ENCODE measurements at regions of chrX and their contacts with region 1.

Region 1: DNA sequence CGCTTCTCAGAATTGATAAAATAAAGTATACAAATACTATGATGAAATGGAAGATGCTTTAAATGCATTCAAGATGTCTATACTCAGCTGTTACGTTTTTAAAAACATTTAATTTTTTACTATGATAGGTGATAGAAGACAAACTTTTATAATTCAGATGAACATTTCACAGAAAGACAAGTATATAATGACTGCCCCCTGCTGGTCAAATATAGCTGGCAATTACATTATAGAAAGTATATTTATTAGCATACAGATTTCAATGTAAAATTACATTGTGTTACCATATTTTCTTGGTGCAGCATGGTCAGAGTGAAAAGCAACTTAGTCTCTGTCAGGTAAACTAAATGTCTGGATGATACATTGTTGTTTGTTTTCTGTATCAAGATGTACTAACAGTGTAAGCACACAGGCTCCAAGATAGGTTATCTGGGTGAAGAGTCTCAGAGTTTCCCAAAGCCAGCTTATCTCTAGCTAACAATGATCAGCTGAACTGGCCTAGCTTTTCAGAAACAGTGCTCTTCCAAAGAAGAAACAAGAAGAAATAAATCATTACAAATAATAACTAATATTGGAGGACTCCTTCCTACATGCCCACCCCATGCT is 54.1 kb downstream of the SRPX start:
- DNase-seq: no peak
- ATAC-seq: peak; percentile 51
- H3K4me3 ChIP-seq: no peak overlapping the region
- H3K27ac ChIP-seq: no peak overlapping the region
- H3K4me1 ChIP-seq: no peaks in the 10 kb centered on the region
- H3K27me3 ChIP-seq: no peaks in the 10 kb centered on the region; a peak in 1 of 4 replicates
- CTCF ChIP-seq: peak; percentile 34 to 52 (median 45); a peak in 3 of 6 replicates
- EP300 ChIP-seq: no peak
- POLR2A ChIP-seq: no peak
- RAD21 ChIP-seq: peak; percentile 61

Region 2: GRCh38 chrX:37509349-37509748 is 657.2 kb before region 1 on chrX:
- CTCF ChIA-PET with region 1: no interaction called
- POLR2A ChIA-PET with region 1: no interaction called
- RAD21 ChIA-PET with region 1: no interaction called
- SMC1A ChIA-PET with region 1: interaction called, 3 read pairs
- in situ Hi-C with region 1: loop called (anchors 25 kb)
- intact Hi-C with region 1: no loop called
- DNase-seq: no peak
- ATAC-seq: peak; percentile 72
- H3K4me3 ChIP-seq: no peak overlapping the region
- H3K27ac ChIP-seq: no peak overlapping the region
- H3K4me1 ChIP-seq: no peaks in the 10 kb centered on the region
- H3K27me3 ChIP-seq: no peaks in the 10 kb centered on the region
- CTCF ChIP-seq: peak; percentile 17 to 37 (median 26); a peak in 2 of 6 replicates
- EP300 ChIP-seq: no peak
- POLR2A ChIP-seq: no peak
- RAD21 ChIP-seq: no peak

Region 3: GRCh38 chrX:37926700-37927099 is 239.9 kb before region 1 on chrX:
- CTCF ChIA-PET with region 1: interaction called, 163 read pairs
- POLR2A ChIA-PET with region 1: no interaction called
- RAD21 ChIA-PET with region 1: interaction called, 71 read pairs
- SMC1A ChIA-PET with region 1: interaction called, 124 read pairs
- in situ Hi-C with region 1: loop called (anchors 5 kb)
- intact Hi-C with region 1: loop called (anchors 1 kb)
- DNase-seq: peak; percentile 4
- ATAC-seq: peak; percentile 84
- H3K4me3 ChIP-seq: no peak overlapping the region
- H3K27ac ChIP-seq: no peak overlapping the region
- H3K4me1 ChIP-seq: no peaks in the 10 kb centered on the region
- H3K27me3 ChIP-seq: no peaks in the 10 kb centered on the region
- CTCF ChIP-seq: peak in 2 of 3 experiments; percentile 46 to 50; a peak in 3 of 6 replicates
- EP300 ChIP-seq: no peak
- POLR2A ChIP-seq: no peak
- RAD21 ChIP-seq: peak; percentile 60

Region 4: DNA sequence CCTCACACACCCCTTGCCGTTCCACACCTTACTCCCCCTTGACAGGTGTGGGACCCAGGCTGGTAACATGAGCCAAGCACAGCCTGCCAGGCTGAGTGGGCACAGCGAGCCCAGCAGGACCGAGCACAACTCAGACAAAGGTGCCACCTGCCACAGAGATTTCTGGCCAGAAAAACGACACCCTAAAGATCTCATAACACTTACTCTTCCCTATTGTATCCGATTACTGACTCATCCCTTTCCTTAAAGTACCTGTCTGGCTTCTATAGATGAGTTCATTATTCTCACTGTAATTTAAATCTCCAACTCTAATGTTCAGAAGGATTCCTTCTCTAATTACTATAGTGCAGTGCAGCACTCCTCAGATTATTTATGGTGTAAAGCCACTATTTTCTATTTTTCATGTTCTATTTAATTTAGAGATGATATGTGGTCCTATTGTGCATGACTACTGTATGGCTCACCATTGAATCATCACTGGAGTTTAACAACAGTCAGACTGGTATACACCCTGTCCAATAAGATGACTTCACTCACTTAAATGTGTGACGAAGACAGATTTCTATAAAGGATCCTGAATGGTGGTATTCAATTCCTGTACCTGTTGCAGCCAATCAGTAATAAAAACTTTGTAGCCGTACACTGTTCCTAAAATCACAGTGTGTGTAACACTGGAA is 167.9 kb before region 1 on chrX:
- CTCF ChIA-PET with region 1: interaction called, 34 read pairs
- POLR2A ChIA-PET with region 1: no interaction called
- RAD21 ChIA-PET with region 1: interaction called, 13 read pairs
- SMC1A ChIA-PET with region 1: interaction called, 9 read pairs
- in situ Hi-C with region 1: no loop called
- intact Hi-C with region 1: no loop called
- DNase-seq: no peak
- ATAC-seq: no peak
- H3K4me3 ChIP-seq: no peak overlapping the region
- H3K27ac ChIP-seq: no peak overlapping the region
- H3K4me1 ChIP-seq: no peaks in the 10 kb centered on the region
- H3K27me3 ChIP-seq: no peaks in the 10 kb centered on the region
- CTCF ChIP-seq: no peak
- EP300 ChIP-seq: no peak
- POLR2A ChIP-seq: no peak
- RAD21 ChIP-seq: no peak

Region 5: GRCh38 chrX:38103857-38104812 is 62.4 kb before region 1 on chrX:
- CTCF ChIA-PET with region 1: interaction called, 12 read pairs
- POLR2A ChIA-PET with region 1: no interaction called
- RAD21 ChIA-PET with region 1: interaction called, 6 read pairs
- SMC1A ChIA-PET with region 1: interaction called, 11 read pairs
- in situ Hi-C with region 1: no loop called
- intact Hi-C with region 1: loop called (anchors 2 kb)
- DNase-seq: peak; percentile 76
- ATAC-seq: peak; percentile 89
- H3K4me3 ChIP-seq: no peak overlapping the region
- H3K27ac ChIP-seq: peak overlapping the region; percentile 51; the same call in 1 of the 2 replicates
- H3K4me1 ChIP-seq: no peaks in the 10 kb centered on the region
- H3K27me3 ChIP-seq: no peaks in the 10 kb centered on the region
- CTCF ChIP-seq: no peak
- EP300 ChIP-seq: peak in 1 of 2 experiments; percentile 58; a peak in 2 of 4 replicates
- POLR2A ChIP-seq: no peak
- RAD21 ChIP-seq: no peak

Region 6: GRCh38 chrX:38192007-38192810 is 25.6 kb after region 1 on chrX:
- CTCF ChIA-PET with region 1: interaction called, 30 read pairs
- POLR2A ChIA-PET with region 1: no interaction called
- RAD21 ChIA-PET with region 1: interaction called, 3 read pairs
- SMC1A ChIA-PET with region 1: interaction called, 5 read pairs
- in situ Hi-C with region 1: no loop called
- intact Hi-C with region 1: no loop called
- DNase-seq: no peak
- ATAC-seq: peak; percentile 87
- H3K4me3 ChIP-seq: no peak overlapping the region
- H3K27ac ChIP-seq: no peak overlapping the region
- H3K4me1 ChIP-seq: 0 out of 2 replicates have a peak, but pooled peaks cover 2% of the 10 kb centered on the region
- H3K27me3 ChIP-seq: no peaks in the 10 kb centered on the region; a peak in 1 of 4 replicates
- CTCF ChIP-seq: peak; percentile 45 to 54 (median 51)
- EP300 ChIP-seq: no peak
- POLR2A ChIP-seq: no peak
- RAD21 ChIP-seq: peak; percentile 68

Region 7: GRCh38 chrX:38233891-38234667 is 67.5 kb after region 1 on chrX:
- CTCF ChIA-PET with region 1: no interaction called
- POLR2A ChIA-PET with region 1: no interaction called
- RAD21 ChIA-PET with region 1: no interaction called
- SMC1A ChIA-PET with region 1: no interaction called
- in situ Hi-C with region 1: no loop called
- intact Hi-C with region 1: no loop called
- DNase-seq: no peak
- ATAC-seq: no peak
- H3K4me3 ChIP-seq: no peak overlapping the region
- H3K27ac ChIP-seq: no peak overlapping the region
- H3K4me1 ChIP-seq: no peaks in the 10 kb centered on the region
- H3K27me3 ChIP-seq: no peaks in the 10 kb centered on the region
- CTCF ChIP-seq: no peak
- EP300 ChIP-seq: no peak
- POLR2A ChIP-seq: no peak
- RAD21 ChIP-seq: no peak

Measured in GM12878 (cell line).